MCF 10A (cell line): ENCODE measurements at regions of chr22 and their contacts with region 1.

Region 1: GRCh38 chr22:38705235-38706100 is at the start of gene GTPBP1:
- DNase-seq: peak; percentile 100
- H3K4me3 Mint-ChIP-seq: peak within 1 kb of the TSS; percentile 88
- H3K27ac Mint-ChIP-seq: peak within 1 kb of the TSS; percentile 88
- H3K4me1 Mint-ChIP-seq: peaks cover 25% of the 10 kb centered on the region
- H3K27me3 Mint-ChIP-seq: no peaks in the 10 kb centered on the region
- CTCF ChIP-seq: no peak
- total RNA-seq, gene GTPBP1: 62.5 and 66.4 TPM in 2 replicates

Region 2: GRCh38 chr22:38656256-38657044 is 49.0 kb before region 1 on chr22 and contains the starts of genes CBY1 and FAM227A:
- CTCF ChIA-PET with region 1: interaction called, 3 read pairs
- POLR2A ChIA-PET with region 1: interaction called, 26 read pairs
- intact Hi-C with region 1: loop called (anchors 2 kb)
- DNase-seq: peak; percentile 89
- H3K4me3 Mint-ChIP-seq: peak within 1 kb of the TSS; percentile 93
- H3K27ac Mint-ChIP-seq: peak within 1 kb of the TSS; percentile 100
- H3K4me1 Mint-ChIP-seq: no peaks in the 10 kb centered on the region
- H3K27me3 Mint-ChIP-seq: no peaks in the 10 kb centered on the region
- CTCF ChIP-seq: no peak
- total RNA-seq, gene CBY1: 40.6 and 42.1 TPM in 2 replicates
- total RNA-seq, gene FAM227A: 2.3 and 2.6 TPM in 2 replicates

Region 3: GRCh38 chr22:38681784-38682335 is 23.6 kb before region 1 on chr22 and contains the start of gene TOMM22:
- CTCF ChIA-PET with region 1: interaction called, 40 read pairs
- POLR2A ChIA-PET with region 1: interaction called, 223 read pairs
- intact Hi-C with region 1: no loop called
- DNase-seq: peak; percentile 83
- H3K4me3 Mint-ChIP-seq: peak within 1 kb of the TSS; percentile 92
- H3K27ac Mint-ChIP-seq: peak within 1 kb of the TSS; percentile 99
- H3K4me1 Mint-ChIP-seq: peaks cover 5% of the 10 kb centered on the region
- H3K27me3 Mint-ChIP-seq: no peaks in the 10 kb centered on the region
- CTCF ChIP-seq: peak; percentile 39
- total RNA-seq, gene TOMM22: 60.4 and 71.5 TPM in 2 replicates

Region 4: GRCh38 chr22:38718414-38718813 is 12.9 kb after region 1 on chr22:
- CTCF ChIA-PET with region 1: interaction called, 14 read pairs
- POLR2A ChIA-PET with region 1: interaction called, 64 read pairs
- intact Hi-C with region 1: no loop called
- DNase-seq: peak; percentile 91
- H3K4me3 Mint-ChIP-seq: no peak overlapping the region
- H3K27ac Mint-ChIP-seq: peak overlapping the region; percentile 60
- H3K4me1 Mint-ChIP-seq: peaks cover 16% of the 10 kb centered on the region
- H3K27me3 Mint-ChIP-seq: no peaks in the 10 kb centered on the region
- CTCF ChIP-seq: peak; percentile 66

Region 5: GRCh38 chr22:38733329-38733723 is 27.9 kb after region 1 on chr22:
- CTCF ChIA-PET with region 1: no interaction called
- POLR2A ChIA-PET with region 1: interaction called, 13 read pairs
- intact Hi-C with region 1: no loop called
- DNase-seq: peak; percentile 49
- H3K4me3 Mint-ChIP-seq: no peak overlapping the region
- H3K27ac Mint-ChIP-seq: peak overlapping the region; percentile 63
- H3K4me1 Mint-ChIP-seq: peaks cover 11% of the 10 kb centered on the region
- H3K27me3 Mint-ChIP-seq: no peaks in the 10 kb centered on the region
- CTCF ChIP-seq: peak; percentile 71

Region 6: GRCh38 chr22:38755911-38756532 is 50.6 kb after region 1 on chr22 and contains the start of gene SUN2:
- CTCF ChIA-PET with region 1: interaction called, 4 read pairs
- POLR2A ChIA-PET with region 1: interaction called, 29 read pairs
- intact Hi-C with region 1: no loop called
- DNase-seq: peak; percentile 84
- H3K4me3 Mint-ChIP-seq: peak within 1 kb of the TSS; percentile 81
- H3K27ac Mint-ChIP-seq: peak within 1 kb of the TSS; percentile 82
- H3K4me1 Mint-ChIP-seq: peaks cover 19% of the 10 kb centered on the region
- H3K27me3 Mint-ChIP-seq: no peaks in the 10 kb centered on the region
- CTCF ChIP-seq: no peak
- total RNA-seq, gene SUN2: 51.9 and 66.8 TPM in 2 replicates